Posterior vena cava (tissue), 2 donors: ENCODE measurements at regions of chr1 and their contacts with region 1.

Region 1: GRCh38 chr1:17089506-17089905 is 29.7 kb downstream of the PADI2 start:
- DNase-seq: no peak

Region 2: GRCh38 chr1:16386454-16387113 is 702.9 kb before region 1 on chr1:
- intact Hi-C with region 1: no loop called
- DNase-seq: no peak

Region 3: GRCh38 chr1:17125756-17126237 is 36.3 kb after region 1 on chr1:
- intact Hi-C with region 1: no loop called
- DNase-seq: peak; percentile 97

Region 4: GRCh38 chr1:17460245-17460644 is 370.7 kb after region 1 on chr1:
- intact Hi-C with region 1: loop called in 1 of 2 experiments (anchors 10 kb)
- DNase-seq: no peak